Left cardiac atrium (tissue), 4 donors: ENCODE measurements at regions of chr11 and their contacts with region 1.

Region 1: DNA sequence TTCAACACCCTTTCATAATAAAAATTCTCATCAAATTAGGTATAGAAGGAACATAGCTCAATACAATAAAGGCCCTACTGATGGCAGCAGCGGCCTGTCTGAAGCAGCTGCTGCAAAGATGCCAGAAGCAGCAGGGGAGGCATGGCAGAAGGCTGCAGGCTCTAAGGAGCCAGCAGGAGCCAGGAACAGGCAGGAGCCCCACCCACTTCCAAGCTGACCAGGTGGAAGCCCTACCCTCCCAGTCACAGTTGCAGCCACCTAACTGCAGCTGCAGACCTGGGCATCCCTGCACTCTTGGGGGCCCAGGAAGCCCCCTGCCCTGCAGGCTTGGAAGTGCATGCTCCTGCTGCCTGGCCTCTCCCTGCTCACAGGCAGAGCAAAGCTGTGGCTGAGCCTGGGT is 18.2 kb upstream of the OR6A2 start:
- DNase-seq: no peak
- ATAC-seq: no peak

Region 2: GRCh38 chr11:6667733-6668374 is 149.8 kb before region 1 on chr11:
- intact Hi-C with region 1: no loop called
- DNase-seq: no peak
- ATAC-seq: peak; percentile 38 to 51

Region 3: DNA sequence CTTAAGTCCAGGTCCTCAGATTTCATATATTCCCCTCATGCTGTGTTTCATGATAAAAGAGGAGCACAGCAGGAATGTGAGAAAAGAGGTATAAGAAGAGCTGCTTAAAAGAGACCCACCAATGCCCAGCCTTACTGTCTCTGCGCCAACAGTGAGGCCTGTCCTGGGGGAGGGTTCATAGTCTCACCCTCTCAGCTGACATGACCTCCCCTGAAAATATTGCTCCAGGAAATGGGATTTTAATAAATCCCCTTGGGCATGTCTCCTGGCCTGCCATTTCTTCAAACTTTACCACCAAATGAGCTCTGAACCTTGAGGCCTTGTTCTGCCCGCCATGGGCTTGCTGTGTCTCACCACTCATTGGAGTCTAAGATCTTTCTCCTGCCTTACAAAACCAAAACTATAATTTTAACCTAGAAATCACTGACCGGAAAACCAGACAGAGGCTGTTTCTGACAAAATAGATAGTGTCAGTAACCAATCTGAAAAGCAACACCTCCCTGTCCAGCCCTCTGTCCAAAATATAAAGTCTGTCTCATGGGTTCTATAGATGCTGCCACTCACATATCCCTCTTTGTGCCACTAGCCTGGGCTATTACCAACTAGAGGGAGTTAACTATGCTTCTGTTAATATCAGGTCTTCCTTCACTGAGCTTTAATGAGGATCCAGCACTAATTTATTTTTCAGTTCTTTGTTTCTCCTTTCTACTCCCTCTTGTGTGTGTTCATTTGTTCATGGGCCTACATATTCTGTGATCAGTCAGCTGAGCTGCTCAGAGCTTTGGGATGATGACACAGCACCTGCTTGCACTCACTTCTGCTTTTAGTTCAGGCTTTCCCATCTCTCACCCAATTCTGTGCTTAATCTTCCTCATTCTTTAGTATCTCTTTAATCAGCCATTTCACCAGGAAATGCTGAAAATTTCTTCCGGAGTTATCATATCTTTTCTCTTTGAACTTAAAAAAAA is 45.5 kb before region 1 on chr11 and contains the start of gene OR2AG2:
- intact Hi-C with region 1: no loop called
- DNase-seq: no peak
- ATAC-seq: peak in 1 of 2 donors; percentile 60
- total RNA-seq, gene OR2AG2: 0.08 to 0.15 TPM

Region 4: DNA sequence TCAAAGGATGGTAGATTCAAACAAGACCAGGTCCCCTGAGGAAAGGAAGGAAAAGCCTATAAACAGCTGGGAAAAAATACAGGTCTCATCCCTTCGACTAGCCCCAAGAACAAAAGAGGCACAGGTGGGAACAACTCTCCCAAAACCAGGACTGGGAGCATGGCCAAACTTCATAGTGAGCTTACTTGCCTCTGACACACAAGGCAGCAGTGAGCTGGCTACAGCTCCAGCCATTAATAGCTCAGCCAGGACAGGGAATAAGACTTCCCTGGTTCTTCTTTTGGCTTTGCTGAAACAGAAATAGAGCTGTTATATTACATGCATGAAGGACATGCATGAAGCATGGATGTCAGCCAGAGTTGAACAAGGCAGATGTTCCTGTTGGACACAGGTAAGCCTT is 45.3 kb after region 1 on chr11 and contains the start of gene OR10A2:
- intact Hi-C with region 1: loop called in 1 of 2 experiments (anchors 2 kb)
- DNase-seq: no peak
- ATAC-seq: no peak
- total RNA-seq, gene OR10A2: not detected